Breast epithelium (tissue), 4 donors: ENCODE measurements at regions of chr9 and their contacts with region 1.

Region 1: GRCh38 chr9:114112778-114113584 is 13.9 kb upstream of the KIF12 start:
- DNase-seq: peak; percentile 56 to 75
- H3K4me3 ChIP-seq: no peak overlapping the region
- H3K27ac ChIP-seq: peak overlapping the region in 1 of 2 donors; percentile 48
- H3K4me1 ChIP-seq: peaks cover 0 to 5% of the 10 kb centered on the region in 2 donors
- H3K27me3 ChIP-seq: no peaks in the 10 kb centered on the region
- CTCF ChIP-seq: no peak
- POLR2A ChIP-seq: no peak

Region 2: DNA sequence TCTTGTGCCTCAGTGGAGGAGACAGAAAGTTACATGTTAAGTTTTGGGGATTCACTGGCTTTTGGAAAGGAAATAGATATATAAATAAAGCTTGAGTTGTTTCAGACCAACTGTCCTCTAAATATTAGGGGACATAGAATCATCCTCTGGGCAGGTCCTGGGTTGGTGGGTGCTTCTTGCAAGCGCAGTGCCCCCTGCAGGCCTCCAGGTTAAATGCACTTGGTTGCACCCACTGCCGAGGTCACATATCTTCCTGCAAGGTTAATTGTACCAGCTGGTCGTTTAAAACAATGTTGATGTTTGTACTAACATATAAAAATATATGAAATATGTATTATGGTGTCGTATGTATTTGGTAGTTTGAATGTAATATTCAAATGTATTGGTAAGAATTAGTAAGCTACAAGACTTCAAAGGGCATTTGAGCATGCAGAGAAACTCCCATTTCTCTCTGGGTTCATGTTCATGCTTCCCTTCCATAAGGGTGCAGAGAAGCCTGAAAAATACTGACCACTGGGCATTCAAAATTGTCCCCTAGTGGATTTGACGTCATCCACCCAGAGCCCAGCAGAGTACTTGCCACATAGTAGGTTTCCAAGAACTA is 149.9 kb before region 1 on chr9:
- intact Hi-C with region 1: no loop called
- DNase-seq: no peak
- H3K4me3 ChIP-seq: no peak overlapping the region
- H3K27ac ChIP-seq: no peak overlapping the region
- H3K4me1 ChIP-seq: no peaks in the 10 kb centered on the region
- H3K27me3 ChIP-seq: no peaks in the 10 kb centered on the region
- CTCF ChIP-seq: peak; percentile 15 to 35 (median 17)
- POLR2A ChIP-seq: no peak

Region 3: DNA sequence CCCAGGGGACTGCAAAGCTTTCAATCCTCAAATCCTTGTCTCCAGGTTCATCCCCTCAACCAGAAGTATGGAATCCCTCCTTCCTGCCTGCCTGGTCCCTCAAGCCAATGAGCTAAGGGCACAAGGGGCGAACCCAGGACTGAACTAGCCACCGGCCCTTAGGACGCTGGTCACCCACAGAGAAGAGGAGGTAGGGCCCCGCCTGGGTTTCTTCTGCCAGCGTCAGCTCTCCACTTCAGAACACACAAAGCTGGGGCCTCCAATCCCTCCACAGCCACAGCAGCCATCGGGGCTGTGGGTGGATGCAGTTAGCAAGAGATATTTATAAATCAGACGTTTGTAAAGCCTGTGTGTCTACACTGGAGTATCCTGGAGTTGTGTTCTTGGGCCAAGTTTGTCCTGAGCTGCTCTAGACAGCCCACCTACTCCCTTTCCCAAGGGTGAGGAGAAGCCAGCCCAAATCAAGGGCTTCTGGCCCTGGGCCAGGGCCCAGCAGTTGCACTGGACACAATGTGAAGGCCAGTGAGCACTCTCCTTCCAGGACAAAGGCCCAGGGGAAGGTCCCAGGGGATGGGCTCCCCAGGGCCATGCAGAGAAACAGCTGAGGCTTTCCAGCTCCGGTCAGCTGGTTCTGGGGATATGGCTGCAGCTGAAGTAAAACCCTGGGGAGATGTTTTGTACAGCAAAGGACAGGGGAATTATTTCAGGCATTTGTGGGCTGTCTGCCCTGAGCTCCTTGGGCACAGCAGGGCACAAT is 53.8 kb before region 1 on chr9:
- intact Hi-C with region 1: no loop called
- DNase-seq: peak in 1 of 2 donors; percentile 10
- H3K4me3 ChIP-seq: no peak overlapping the region
- H3K27ac ChIP-seq: no peak overlapping the region
- H3K4me1 ChIP-seq: no peaks in the 10 kb centered on the region
- H3K27me3 ChIP-seq: no peaks in the 10 kb centered on the region
- CTCF ChIP-seq: no peak
- POLR2A ChIP-seq: no peak

Region 4: GRCh38 chr9:114174876-114175771 is 62.1 kb after region 1 on chr9:
- intact Hi-C with region 1: loop called (anchors 5 kb)
- DNase-seq: no peak
- H3K4me3 ChIP-seq: no peak overlapping the region
- H3K27ac ChIP-seq: no peak overlapping the region
- H3K4me1 ChIP-seq: no peaks in the 10 kb centered on the region
- H3K27me3 ChIP-seq: no peaks in the 10 kb centered on the region
- CTCF ChIP-seq: no peak
- POLR2A ChIP-seq: no peak

Region 5: DNA sequence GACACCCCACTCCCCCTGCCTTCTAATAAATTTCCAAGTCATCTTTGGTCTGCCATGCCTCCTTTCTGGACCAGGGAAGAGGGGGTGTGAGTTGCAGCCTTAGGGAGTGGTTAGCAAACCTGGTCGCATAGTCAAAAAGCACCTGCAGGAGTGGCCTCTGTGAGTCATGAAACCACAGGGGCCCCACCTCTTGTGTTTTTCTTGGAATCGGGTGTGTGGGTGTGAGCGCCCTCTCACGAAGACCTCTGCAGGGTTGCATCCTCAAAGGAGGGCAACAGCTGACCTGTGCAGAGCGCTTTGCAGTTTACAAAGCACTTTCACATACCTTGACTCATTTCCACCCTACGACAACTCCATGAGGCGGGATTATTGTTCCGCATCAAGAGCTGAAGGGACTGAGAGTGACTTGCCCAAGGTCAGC is 605.8 kb after region 1 on chr9:
- intact Hi-C with region 1: no loop called
- DNase-seq: no peak
- H3K4me3 ChIP-seq: no peak overlapping the region
- H3K27ac ChIP-seq: no peak overlapping the region
- H3K4me1 ChIP-seq: no peaks in the 10 kb centered on the region
- H3K27me3 ChIP-seq: no peaks in the 10 kb centered on the region
- CTCF ChIP-seq: no peak
- POLR2A ChIP-seq: no peak